ENCODE measurements at regions of chr9 and their contacts with region 1.

Region 1: GRCh38 chr9:6506571-6506970 is 93.6 kb downstream of the UHRF2 start:
- DNase-seq: no peak
- ATAC-seq: no peak
- H3K4me3 ChIP-seq: no peak overlapping the region
- H3K4me3 Mint-ChIP-seq: no peak overlapping the region
- H3K27ac ChIP-seq: no peak overlapping the region
- H3K27ac Mint-ChIP-seq: peak overlapping the region; percentile 23
- H3K4me1 ChIP-seq: no peaks in the 10 kb centered on the region
- H3K4me1 Mint-ChIP-seq: no peaks in the 10 kb centered on the region
- H3K27me3 ChIP-seq: no peaks in the 10 kb centered on the region
- H3K27me3 Mint-ChIP-seq: no peaks in the 10 kb centered on the region
- CTCF ChIP-seq: no peak

Region 2: GRCh38 chr9:6428940-6429889 is 77.4 kb before region 1 on chr9:
- CTCF ChIA-PET with region 1: no interaction called
- POLR2A ChIA-PET with region 1: no interaction called
- intact Hi-C with region 1: loop called in 1 of 2 experiments (anchors 5 kb)
- DNase-seq: peak in 3 of 9 experiments; percentile 16 to 64 (median 42)
- ATAC-seq: peak; percentile 79
- H3K4me3 ChIP-seq: no peak overlapping the region
- H3K4me3 Mint-ChIP-seq: peak overlapping the region; percentile 63
- H3K27ac ChIP-seq: peak overlapping the region in 1 of 2 experiments; percentile 48
- H3K27ac Mint-ChIP-seq: peak overlapping the region; percentile 41
- H3K4me1 ChIP-seq: peaks cover 29% of the 10 kb centered on the region
- H3K4me1 Mint-ChIP-seq: peaks cover 84% of the 10 kb centered on the region
- H3K27me3 ChIP-seq: no peaks in the 10 kb centered on the region
- H3K27me3 Mint-ChIP-seq: no peaks in the 10 kb centered on the region
- CTCF ChIP-seq: no peak

Measured in CD8-positive, alpha-beta T cell (primary cell).